H1 (cell line): ENCODE measurements at regions of chr19 and their contacts with region 1.

Region 1: GRCh38 chr19:53958168-53958571 is 4.6 kb upstream of the CACNG8 start:
- DNase-seq: peak in 1 of 2 experiments; percentile 83
- H3K4me3 ChIP-seq: peak overlapping the region; percentile 17 to 61 (median 34); a peak in 7 of 8 replicates
- H3K27ac ChIP-seq: peak overlapping the region; percentile 83
- H3K4me1 ChIP-seq: peaks cover 7 to 20% (median 16%) of the 10 kb centered on the region in 4 experiments
- H3K27me3 ChIP-seq: peaks cover 0 to 3% (median 1%) of the 10 kb centered on the region in 4 experiments; a peak in 2 of 7 replicates
- CTCF ChIP-seq: no peak
- EP300 ChIP-seq: no peak
- POLR2A ChIP-seq: no peak
- RAD21 ChIP-seq: no peak

Region 2: GRCh38 chr19:53892981-53893325 is 65.2 kb before region 1 on chr19:
- CTCF ChIA-PET with region 1: no interaction called
- POLR2A ChIA-PET with region 1: no interaction called
- DNase-seq: no peak
- H3K4me3 ChIP-seq: no peak overlapping the region
- H3K27ac ChIP-seq: no peak overlapping the region
- H3K4me1 ChIP-seq: peaks cover 0 to 10% (median 5%) of the 10 kb centered on the region in 4 experiments; a peak in 5 of 7 replicates
- H3K27me3 ChIP-seq: peaks cover 0 to 3% (median 0%) of the 10 kb centered on the region in 4 experiments; a peak in 1 of 7 replicates
- CTCF ChIP-seq: no peak
- EP300 ChIP-seq: no peak
- POLR2A ChIP-seq: no peak
- RAD21 ChIP-seq: no peak

Region 3: DNA sequence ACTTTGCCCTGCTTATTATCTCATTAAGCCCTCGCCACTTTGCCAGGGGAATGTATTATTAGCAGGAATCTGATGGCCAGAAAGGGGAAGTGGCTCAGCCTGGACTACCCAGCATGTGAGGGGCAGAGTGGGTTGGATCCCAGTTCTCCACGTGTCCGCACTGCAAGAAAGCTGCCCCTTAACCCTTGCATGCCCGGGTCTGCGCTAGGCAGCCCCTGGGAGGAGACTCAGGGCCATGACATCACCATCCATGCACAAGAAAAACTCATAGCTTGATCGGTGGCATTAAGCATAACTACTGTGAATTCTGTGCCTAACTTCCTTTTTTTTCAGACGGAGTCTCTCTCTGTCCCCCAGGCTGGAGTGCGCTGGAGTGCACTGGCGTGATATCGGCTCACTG is 13.5 kb after region 1 on chr19:
- CTCF ChIA-PET with region 1: interaction called, 3 read pairs
- POLR2A ChIA-PET with region 1: interaction called, 30 read pairs
- DNase-seq: no peak
- H3K4me3 ChIP-seq: no peak overlapping the region
- H3K27ac ChIP-seq: no peak overlapping the region
- H3K4me1 ChIP-seq: no peaks in the 10 kb centered on the region
- H3K27me3 ChIP-seq: no peaks in the 10 kb centered on the region
- CTCF ChIP-seq: no peak
- EP300 ChIP-seq: no peak
- POLR2A ChIP-seq: no peak
- RAD21 ChIP-seq: no peak

Region 4: DNA sequence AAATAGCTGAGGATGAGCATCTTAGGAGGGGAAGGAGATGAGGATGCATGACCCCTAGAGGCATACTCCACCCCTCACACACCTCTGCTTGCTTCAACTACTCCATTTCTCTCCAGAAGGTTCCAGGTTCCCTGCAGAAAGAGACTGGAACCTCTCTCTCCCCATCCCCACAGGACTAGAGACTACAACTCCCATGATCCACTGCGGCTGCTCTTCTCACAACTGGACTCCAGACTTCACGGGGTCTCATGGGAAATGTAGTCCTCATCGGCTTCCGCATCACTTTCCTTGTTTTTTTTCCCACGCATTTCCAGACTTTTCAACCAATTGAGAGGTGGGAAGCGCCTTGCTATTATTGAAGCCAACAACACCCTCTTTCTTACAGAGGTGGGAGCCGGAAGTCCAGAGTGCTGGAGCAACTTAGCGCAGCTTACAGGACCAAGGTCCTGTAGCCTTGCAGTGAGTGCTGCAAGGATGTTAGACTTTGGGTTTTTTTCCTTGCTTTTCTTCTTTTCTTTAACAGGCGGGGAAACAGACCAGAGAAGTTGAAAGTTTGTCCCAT is 19.3 kb after region 1 on chr19:
- CTCF ChIA-PET with region 1: interaction called, 7 read pairs
- POLR2A ChIA-PET with region 1: interaction called, 41 read pairs
- DNase-seq: peak in 1 of 2 experiments; percentile 86
- H3K4me3 ChIP-seq: peak overlapping the region; percentile 53 to 78 (median 67); a peak in 7 of 8 replicates
- H3K27ac ChIP-seq: no peak overlapping the region
- H3K4me1 ChIP-seq: peaks cover 4 to 14% (median 9%) of the 10 kb centered on the region in 4 experiments
- H3K27me3 ChIP-seq: no peaks in the 10 kb centered on the region; a peak in 2 of 7 replicates
- CTCF ChIP-seq: no peak
- EP300 ChIP-seq: no peak
- POLR2A ChIP-seq: no peak
- RAD21 ChIP-seq: peak in 1 of 2 experiments; percentile 30; a peak in 1 of 4 replicates